PC-9 (cell line): ENCODE measurements at regions of chr4 and their contacts with region 1.

Region 1: DNA sequence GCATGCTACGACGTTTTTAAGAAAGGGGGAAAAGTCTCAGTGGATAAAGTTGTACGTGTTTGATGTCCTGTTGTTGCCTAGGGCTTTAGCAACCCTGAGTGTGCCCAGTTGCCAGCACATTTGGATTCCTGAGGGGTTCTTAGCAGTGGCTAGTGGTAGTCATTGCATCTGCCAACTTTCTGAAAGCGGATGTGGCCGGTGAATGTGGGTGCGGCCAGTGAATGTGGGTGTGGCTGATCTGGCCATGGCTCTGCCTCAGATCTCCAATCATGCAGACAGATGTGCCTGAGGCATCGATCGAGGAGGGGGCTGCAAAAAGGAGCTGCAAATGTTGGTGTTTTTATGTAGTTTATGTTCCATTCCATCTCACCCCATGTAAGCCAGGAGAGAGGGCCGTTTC is 41.5 kb upstream of the FAT1 start:
- DNase-seq: peak; percentile 80 to 92
- H3K4me3 ChIP-seq: peak overlapping the region; percentile 45; the same call in 1 of the 2 replicates
- H3K27ac ChIP-seq: peak overlapping the region; percentile 90
- H3K4me1 ChIP-seq: peaks cover 30% of the 10 kb centered on the region
- H3K27me3 ChIP-seq: no peaks in the 10 kb centered on the region
- CTCF ChIP-seq: no peak

Region 2: DNA sequence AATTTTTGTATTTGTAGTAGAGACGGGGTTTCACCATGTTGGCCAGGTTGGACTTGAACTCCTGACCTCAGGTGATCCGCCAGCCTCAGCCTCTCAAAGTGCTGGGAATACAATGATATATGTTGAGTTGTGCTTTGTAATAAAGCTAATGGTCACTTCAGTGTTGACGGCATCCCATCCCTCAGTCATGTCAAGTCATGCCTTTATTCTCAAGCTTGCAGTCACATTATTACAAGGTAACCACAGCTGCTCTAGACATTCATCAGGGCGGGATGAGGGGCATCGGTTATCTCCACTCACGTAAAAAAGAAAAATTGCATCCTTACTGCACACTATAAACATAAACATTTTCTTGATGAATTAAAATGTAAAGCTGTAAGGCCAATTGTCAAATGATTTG is 28.7 kb before region 1 on chr4:
- CTCF ChIA-PET with region 1: no interaction called
- POLR2A ChIA-PET with region 1: no interaction called
- intact Hi-C with region 1: loop called (anchors 1 kb)
- DNase-seq: no peak
- H3K4me3 ChIP-seq: no peak overlapping the region
- H3K27ac ChIP-seq: peak overlapping the region; percentile 86
- H3K4me1 ChIP-seq: peaks cover 9% of the 10 kb centered on the region
- H3K27me3 ChIP-seq: no peaks in the 10 kb centered on the region
- CTCF ChIP-seq: no peak

Region 3: DNA sequence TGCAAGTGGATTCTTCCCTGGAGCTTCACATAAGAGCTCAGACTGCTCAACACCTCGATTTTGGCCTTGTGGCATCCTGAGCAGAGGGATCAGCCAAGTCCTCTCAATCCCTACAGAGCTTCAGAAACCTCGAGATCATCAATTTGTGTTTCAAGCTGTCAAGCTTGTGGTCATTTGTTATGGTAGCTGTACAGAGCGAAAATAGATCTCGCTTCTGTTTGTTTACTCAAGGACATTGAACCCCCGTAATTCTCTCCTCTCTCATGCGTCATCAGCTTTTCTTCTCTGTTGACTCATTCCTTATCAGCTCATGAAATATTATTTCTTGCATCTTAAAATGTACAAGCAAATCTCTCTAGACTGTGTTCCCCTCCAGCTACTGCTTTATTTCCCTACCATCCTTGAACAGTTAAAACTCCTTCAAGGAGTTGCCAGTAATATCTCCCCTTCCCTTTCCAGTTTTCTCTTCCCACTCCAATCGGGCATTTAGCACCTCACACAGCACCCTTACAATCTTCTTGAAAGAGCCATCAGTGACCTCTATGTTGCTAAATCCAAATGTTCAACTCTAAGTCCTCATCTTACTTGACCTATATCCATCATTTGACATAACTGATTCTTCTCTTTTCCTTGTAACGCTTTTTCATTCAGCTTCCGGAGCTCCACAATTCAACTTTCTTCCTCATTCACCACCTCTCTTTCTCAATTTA is 64.8 kb after region 1 on chr4:
- CTCF ChIA-PET with region 1: no interaction called
- POLR2A ChIA-PET with region 1: no interaction called
- intact Hi-C with region 1: loop called (anchors 5 kb)
- DNase-seq: peak; percentile 21 to 78
- H3K4me3 ChIP-seq: no peak overlapping the region
- H3K27ac ChIP-seq: no peak overlapping the region
- H3K4me1 ChIP-seq: peaks cover 15% of the 10 kb centered on the region
- H3K27me3 ChIP-seq: no peaks in the 10 kb centered on the region
- CTCF ChIP-seq: no peak

Region 4: DNA sequence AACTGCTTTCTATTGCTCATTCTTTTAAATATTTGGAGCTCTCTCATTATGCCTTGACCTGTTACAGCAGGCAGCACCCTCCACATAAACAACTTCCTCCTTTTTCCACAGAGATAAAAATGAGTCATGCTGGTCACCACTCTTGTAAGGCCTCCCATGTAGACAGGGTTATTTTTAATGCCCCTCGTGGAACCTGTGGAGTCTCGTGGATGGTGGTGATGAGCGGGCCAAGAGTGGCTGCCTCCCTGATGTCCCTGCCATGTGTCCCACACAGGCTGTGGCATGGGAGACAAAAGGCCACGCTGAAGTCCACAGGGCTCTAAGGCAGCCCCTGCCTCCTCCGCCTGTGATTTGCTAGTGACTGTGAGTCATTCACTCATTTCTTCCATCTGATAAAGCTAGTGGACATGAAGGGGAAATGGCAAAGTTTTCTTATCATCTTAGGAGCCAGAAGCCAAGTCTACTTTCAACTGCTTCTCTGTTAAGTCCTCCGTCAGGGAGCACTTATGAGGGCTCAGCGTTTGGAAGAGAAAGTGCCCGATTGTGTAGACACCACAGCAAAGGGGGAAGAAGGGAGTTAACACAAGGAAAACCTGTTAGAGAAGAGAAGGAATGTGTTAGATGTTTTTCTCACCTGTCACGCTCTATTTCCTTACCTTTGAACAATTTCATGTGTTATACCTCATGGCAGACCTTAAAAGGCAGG is 80.2 kb after region 1 on chr4:
- CTCF ChIA-PET with region 1: no interaction called
- POLR2A ChIA-PET with region 1: no interaction called
- intact Hi-C with region 1: loop called (anchors 2 kb)
- DNase-seq: peak; percentile 53 to 74
- H3K4me3 ChIP-seq: no peak overlapping the region
- H3K27ac ChIP-seq: peak overlapping the region; percentile 49
- H3K4me1 ChIP-seq: peaks cover 20% of the 10 kb centered on the region
- H3K27me3 ChIP-seq: no peaks in the 10 kb centered on the region
- CTCF ChIP-seq: no peak

Region 5: GRCh38 chr4:186936496-186937375 is 171.6 kb after region 1 on chr4:
- CTCF ChIA-PET with region 1: no interaction called
- POLR2A ChIA-PET with region 1: interaction called, 9 read pairs
- intact Hi-C with region 1: loop called (anchors 1 kb)
- DNase-seq: peak; percentile 25 to 88
- H3K4me3 ChIP-seq: peak overlapping the region; percentile 43; the same call in 1 of the 2 replicates
- H3K27ac ChIP-seq: peak overlapping the region; percentile 78
- H3K4me1 ChIP-seq: peaks cover 17% of the 10 kb centered on the region
- H3K27me3 ChIP-seq: no peaks in the 10 kb centered on the region
- CTCF ChIP-seq: peak; percentile 41; the same call in 1 of the 2 replicates